ENCODE measurements at regions of chr14 and their contacts with region 1.

Region 1: DNA sequence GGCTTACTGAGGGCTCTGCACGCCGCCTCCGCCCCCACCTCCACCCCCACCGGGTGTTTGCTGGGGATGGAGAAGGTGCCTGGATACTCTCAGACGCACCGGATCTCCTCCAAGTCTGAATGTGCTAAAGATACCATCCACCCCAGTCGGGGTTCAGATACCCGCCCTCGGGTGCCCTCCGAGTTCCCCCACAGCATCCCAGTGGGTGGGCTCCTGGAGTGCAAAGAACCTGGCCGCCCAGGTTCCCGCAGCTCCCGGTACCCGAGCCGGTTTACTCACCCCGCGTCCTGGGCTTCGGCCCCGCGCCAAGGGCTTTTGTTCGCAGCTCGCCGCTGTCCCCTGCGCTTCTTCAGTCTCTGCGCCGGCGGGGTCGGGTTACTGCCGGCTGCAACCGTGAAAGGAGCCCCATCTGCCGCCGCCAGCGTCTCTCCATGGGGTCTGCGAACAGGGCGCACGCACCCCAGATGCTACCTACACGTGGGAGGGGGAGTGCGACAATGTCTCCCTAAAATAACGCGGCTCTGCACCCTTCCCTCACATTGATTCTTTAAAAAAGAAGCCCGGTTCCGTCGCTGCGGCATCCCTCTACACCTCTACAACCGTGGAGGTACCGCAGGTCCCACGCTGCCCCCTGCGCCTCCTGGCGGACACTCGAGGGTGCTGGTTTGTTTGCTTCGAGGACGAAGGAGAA is at the start of gene CCDC177:
- DNase-seq: peak; percentile 77
- H3K4me3 Mint-ChIP-seq: peak within 1 kb of the TSS; percentile 62
- H3K27ac Mint-ChIP-seq: no peak within 1 kb of the TSS
- H3K4me1 Mint-ChIP-seq: peaks cover 10% of the 10 kb centered on the region
- H3K27me3 Mint-ChIP-seq: peaks cover 64% of the 10 kb centered on the region
- total RNA-seq, gene CCDC177: not detected

Region 2: DNA sequence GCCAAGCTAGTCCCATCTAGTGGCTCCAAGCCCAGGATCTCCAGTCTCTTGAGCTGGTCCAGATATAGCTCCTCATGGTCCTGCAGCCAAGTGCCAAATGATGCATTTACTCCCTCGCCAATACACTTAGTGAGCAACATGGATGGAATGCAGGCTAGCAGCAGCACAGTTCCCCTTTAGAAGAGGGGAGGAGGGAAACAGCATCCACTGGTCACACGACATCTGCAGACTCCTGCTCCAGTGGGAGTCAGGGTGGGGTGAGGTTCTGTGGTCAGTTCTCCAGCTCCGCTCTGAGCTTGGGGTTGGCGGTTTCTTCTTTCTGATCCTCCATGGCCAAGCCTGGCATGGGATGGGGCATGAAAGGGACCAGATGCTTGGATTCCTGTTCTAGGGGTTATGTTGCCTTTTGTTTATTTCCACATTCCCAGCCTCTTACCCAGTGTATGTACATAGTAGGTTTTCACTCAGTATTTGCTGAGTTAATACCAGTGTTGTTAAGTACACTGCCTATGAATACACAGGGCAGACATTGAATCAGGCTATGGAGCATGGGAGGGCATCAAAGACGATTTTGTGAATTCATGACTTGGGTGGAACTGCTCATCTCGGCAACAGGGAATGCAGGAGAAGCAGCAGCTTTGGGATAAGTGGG is 257.2 kb before region 1 on chr14:
- CTCF ChIA-PET with region 1: no interaction called
- POLR2A ChIA-PET with region 1: no interaction called
- DNase-seq: no peak
- H3K4me3 Mint-ChIP-seq: no peak overlapping the region
- H3K27ac Mint-ChIP-seq: no peak overlapping the region
- H3K4me1 Mint-ChIP-seq: no peaks in the 10 kb centered on the region
- H3K27me3 Mint-ChIP-seq: no peaks in the 10 kb centered on the region

Region 3: DNA sequence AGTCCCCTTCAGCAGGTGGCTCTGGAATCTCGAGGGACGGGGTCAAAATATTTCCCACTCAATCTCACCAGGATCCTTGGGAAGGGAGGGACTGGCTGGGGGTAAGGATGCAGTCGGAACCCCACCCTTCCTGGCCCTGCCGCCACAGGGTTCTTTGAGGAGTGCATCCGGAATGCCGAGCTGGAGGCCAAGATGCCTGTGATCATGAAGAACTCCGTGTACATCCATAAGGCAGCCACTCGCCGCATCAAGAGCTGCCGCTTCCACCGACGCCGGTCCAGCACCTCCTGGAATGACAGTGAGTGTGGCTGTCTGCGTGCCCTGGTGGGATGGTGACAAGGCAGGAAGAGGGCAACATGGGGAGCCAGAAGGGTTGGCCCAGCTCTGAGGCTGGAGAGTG is 46.8 kb before region 1 on chr14:
- CTCF ChIA-PET with region 1: no interaction called
- POLR2A ChIA-PET with region 1: no interaction called
- DNase-seq: no peak
- H3K4me3 Mint-ChIP-seq: no peak overlapping the region
- H3K27ac Mint-ChIP-seq: no peak overlapping the region
- H3K4me1 Mint-ChIP-seq: no peaks in the 10 kb centered on the region
- H3K27me3 Mint-ChIP-seq: peaks cover 11% of the 10 kb centered on the region

Region 4: DNA sequence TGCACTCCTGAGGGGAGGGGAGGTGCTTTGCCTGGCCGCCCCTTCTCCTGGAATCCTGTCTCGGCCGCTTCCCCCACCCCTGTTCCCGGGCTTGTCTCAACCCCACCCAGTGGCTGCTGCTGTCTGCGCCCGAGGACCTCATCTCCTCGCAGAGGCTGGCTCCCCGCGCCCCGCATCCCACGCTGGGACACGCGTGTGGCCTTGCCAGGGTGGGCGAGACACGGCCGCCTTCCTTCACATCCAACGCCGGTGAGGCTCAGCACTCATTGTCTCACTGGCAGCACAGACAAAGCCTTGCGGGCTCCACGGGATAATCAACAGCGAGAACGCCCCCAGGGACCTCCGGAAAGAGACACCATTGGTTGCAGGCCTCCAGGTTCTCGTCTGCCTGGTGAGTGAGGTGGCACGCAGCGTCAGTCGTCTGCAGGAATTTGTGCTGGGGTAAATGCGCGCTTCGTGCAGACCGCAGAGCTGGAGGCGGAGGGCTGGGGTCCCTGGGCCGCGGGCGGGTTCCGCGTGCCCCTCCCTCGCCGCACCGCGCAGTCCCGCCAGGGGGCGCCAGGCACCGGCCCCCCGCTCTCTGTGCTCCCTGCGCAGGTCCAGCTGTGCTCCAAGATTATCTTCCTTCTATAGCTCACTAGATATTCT is 26.6 kb before region 1 on chr14:
- CTCF ChIA-PET with region 1: interaction called, 13 read pairs
- POLR2A ChIA-PET with region 1: no interaction called
- DNase-seq: peak; percentile 23
- H3K4me3 Mint-ChIP-seq: no peak overlapping the region
- H3K27ac Mint-ChIP-seq: no peak overlapping the region
- H3K4me1 Mint-ChIP-seq: peaks cover 19% of the 10 kb centered on the region
- H3K27me3 Mint-ChIP-seq: peaks cover 46% of the 10 kb centered on the region

Measured in activated CD4-positive, alpha-beta memory T cell treated with anti-CD3 and anti-CD28 coated beads, Interleukin-2, amount 10 ng/mL, durations not matched to agents 7 days and 5 days (primary cell).